Psoas muscle (tissue), 8 donors: ENCODE measurements at regions of chr1 and their contacts with region 1.

Region 1: GRCh38 chr1:28528356-28528755 is 22.5 kb downstream of the RCC1 start:
- DNase-seq: no peak
- ATAC-seq: no peak
- H3K4me3 ChIP-seq: no peak overlapping the region
- H3K27ac ChIP-seq: no peak overlapping the region
- H3K4me1 ChIP-seq: no peaks in the 10 kb centered on the region
- H3K27me3 ChIP-seq: no peaks in the 10 kb centered on the region
- CTCF ChIP-seq: no peak

Region 2: GRCh38 chr1:28594661-28595411 is 66.5 kb after region 1 on chr1:
- intact Hi-C with region 1: loop called in 1 of 2 experiments (anchors 2 kb)
- DNase-seq: peak; percentile 45 to 60
- ATAC-seq: peak in 1 of 4 donors; percentile 17
- H3K4me3 ChIP-seq: no peak overlapping the region
- H3K27ac ChIP-seq: no peak overlapping the region
- H3K4me1 ChIP-seq: peaks cover 3% of the 10 kb centered on the region
- H3K27me3 ChIP-seq: no peaks in the 10 kb centered on the region
- CTCF ChIP-seq: no peak

Region 3: DNA sequence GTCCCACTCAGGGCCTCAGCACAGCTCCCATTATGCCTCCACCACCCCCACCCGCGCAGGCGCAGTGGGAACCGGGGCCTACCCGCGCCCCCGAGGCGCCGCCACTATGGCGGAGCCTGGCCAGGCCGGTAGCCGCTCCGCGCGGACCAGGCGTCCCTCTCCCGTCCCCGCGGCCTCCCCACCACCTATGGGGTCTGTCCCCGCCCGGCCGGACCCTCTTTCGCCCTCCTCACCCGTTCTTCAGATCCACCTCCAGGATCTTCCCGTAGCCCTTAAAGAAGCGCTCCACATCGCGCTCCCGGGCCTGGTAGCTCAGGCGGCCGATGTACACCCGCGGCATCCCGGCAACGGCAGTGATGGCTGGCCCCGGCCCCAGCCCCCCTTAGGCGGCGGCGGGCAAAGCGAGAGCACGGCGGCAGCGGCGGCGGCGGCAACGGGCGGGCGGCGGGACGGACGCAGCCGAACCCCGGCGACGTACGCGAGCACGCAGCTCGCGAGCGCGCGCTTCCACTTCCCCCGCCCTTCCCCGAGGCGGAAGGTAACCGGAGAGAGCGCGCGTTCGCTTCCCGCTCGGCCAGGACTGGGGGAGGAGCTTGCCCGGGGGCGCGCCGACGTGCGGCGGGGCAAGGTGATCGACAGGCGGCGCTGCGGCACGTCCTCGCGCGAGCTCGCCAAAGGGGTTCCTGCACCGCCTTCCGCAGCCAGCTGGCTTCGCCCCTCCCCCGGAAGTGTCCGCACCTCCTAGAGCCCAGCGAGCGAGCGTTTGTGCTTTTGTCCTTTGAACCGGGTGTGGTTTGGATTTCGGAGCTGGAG is 653.3 kb after region 1 on chr1 and contains the start of gene SRSF4:
- intact Hi-C with region 1: no loop called
- DNase-seq: peak; percentile 99 to 100
- ATAC-seq: peak; percentile 93 to 96 (median 95)
- H3K4me3 ChIP-seq: peak within 1 kb of the TSS; percentile 97
- H3K27ac ChIP-seq: peak within 1 kb of the TSS; percentile 100
- H3K4me1 ChIP-seq: peaks cover 43% of the 10 kb centered on the region
- H3K27me3 ChIP-seq: no peaks in the 10 kb centered on the region
- CTCF ChIP-seq: peak; percentile 60
- total RNA-seq, gene SRSF4: 49.3 to 80.4 (median 66.8) TPM